ENCODE measurements at regions of chr2 and their contacts with region 1.

Region 1: DNA sequence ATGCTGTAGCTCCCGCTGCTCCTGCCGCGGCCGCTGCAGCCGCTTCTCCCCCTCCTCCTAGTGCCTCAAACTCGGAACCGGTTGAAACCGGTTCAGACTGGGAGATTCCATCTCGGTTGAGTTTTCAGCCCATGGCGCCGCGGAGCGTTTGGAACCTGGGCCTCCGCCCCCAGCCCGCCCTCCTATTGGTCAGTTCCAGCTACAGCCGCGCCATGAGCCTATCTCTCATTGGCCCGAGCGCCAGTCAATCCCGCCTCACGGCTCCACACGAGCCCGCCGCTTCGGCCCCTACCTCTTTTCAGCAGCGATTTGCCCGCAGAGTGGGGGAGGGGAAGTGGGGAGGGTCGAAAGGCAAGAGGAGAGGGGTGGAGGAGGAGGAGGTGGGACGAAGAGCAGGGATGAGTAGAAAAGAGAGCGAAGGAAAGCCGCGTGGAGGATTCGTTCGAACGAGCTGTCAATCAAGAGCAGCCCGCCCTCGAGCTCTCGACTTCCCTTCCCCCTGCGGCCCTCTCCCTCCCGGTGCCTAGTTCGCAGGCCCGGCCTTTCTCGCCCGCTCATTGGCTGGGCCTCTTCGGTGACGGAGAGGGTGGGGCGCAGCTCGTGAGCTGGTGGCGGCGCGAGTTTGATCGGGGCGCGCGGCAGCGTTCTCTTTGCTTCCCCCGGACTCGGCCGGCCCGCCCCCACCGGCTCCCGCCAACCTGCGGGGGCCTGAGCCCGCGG is at the start of gene XPO1:
- DNase-seq: peak; percentile 100
- H3K4me3 Mint-ChIP-seq: peak within 1 kb of the TSS; percentile 90
- H3K27ac Mint-ChIP-seq: peak within 1 kb of the TSS; percentile 97
- H3K4me1 Mint-ChIP-seq: peaks cover 27% of the 10 kb centered on the region
- H3K27me3 Mint-ChIP-seq: no peaks in the 10 kb centered on the region
- total RNA-seq, gene XPO1: 201 to 203 TPM

Region 2: DNA sequence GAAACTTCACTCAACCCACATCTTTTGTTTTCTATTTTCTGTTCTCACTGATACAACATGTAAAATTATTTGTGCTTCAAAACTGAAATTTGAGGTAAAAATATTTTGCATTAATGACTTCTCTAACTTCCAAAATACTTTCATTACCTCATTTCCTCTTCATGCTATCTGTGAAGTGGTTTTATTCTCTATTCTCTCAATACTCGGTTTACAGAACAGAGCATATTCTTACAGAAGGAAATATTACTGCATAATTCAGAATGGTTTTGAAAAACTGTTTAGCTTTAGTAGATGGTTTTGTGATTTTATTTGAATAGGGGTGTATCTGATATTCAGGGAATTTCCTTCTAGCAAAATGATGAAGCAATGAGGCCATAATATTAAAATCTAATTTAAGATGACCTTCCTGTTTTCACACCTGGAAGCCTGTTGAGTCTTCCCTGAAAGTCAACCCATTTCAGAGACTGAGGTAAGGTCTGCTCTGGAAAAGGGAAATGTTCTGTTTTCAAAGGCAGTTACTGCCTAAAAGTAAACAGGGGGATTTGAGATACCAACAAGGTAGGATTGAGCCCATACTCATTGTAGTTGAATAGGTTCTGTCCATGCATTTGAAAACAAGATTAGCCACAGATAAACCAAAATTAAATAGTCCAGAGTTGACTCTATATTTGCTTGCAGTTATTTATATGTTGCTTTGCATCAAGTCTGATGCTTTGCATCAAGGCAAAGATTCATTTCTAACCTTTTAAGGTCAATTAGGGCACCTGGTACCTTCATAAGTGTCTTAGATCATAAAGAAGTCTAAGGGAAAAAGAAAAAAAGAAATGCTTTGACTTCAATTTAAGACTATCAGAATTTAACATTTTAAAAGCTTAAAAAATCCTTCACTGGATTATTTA is 571.6 kb before region 1 on chr2:
- CTCF ChIA-PET with region 1: no interaction called
- intact Hi-C with region 1: loop called (anchors 2 kb)
- DNase-seq: no peak
- H3K4me3 Mint-ChIP-seq: peak overlapping the region; percentile 11
- H3K27ac Mint-ChIP-seq: peak overlapping the region; percentile 62
- H3K4me1 Mint-ChIP-seq: peaks cover 62% of the 10 kb centered on the region
- H3K27me3 Mint-ChIP-seq: no peaks in the 10 kb centered on the region

Region 3: GRCh38 chr2:61144697-61145268 is 393.6 kb before region 1 on chr2:
- CTCF ChIA-PET with region 1: no interaction called
- intact Hi-C with region 1: loop called (anchors 2 kb)
- DNase-seq: peak; percentile 97
- H3K4me3 Mint-ChIP-seq: peak overlapping the region; percentile 92
- H3K27ac Mint-ChIP-seq: peak overlapping the region; percentile 85
- H3K4me1 Mint-ChIP-seq: peaks cover 6% of the 10 kb centered on the region
- H3K27me3 Mint-ChIP-seq: no peaks in the 10 kb centered on the region

Region 4: DNA sequence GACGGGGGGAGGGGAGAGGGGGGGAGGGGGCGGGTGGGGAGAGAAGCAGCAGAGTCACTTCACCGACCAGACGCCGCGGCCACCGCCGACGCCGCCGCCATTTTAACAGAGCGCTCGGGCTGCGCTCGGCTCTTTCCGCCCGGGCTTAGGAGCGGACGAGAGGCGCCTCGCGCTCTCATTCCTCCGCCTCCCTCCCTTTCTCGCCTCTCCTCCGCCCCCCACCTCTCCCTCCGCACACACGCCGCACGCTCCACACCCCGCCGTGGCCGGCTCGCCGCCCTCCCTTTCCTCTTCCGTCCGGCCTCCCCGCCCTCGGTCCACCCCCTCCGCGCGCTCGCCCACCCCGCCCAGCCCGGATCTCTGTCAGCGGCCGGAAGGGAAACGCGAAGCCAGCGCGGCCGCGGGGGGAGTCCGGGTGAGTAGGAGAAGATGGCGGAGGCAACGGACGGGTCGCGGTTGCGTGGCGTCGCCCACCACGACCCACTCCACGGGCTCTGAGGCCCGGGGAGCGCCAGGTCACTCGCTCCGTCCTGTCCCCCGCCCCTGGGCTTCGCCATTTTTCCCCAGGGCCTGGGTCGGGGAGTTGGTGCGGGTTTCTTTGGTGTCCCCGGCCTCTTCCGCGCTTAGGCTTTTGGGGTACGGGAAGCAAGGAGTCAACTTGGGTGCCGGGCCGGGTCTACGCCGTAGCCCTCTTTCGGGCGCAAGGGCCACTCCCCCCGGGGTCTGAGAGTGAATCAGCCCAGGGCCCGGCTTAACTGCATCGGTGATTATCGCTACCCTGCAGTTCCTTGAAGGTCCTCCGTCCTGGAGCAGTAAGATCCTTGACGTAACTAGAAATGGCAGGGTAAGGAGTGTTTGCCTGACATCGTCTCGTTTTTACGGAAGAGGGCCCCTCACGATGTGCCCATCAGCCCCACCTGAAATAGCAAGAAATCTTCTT is 67.1 kb before region 1 on chr2 and contains the start of gene USP34:
- CTCF ChIA-PET with region 1: interaction called, 3 read pairs
- intact Hi-C with region 1: loop called (anchors 1 kb)
- DNase-seq: peak; percentile 94
- H3K4me3 Mint-ChIP-seq: peak within 1 kb of the TSS; percentile 98
- H3K27ac Mint-ChIP-seq: peak within 1 kb of the TSS; percentile 97
- H3K4me1 Mint-ChIP-seq: peaks cover 31% of the 10 kb centered on the region
- H3K27me3 Mint-ChIP-seq: no peaks in the 10 kb centered on the region
- total RNA-seq, gene USP34: 59.5 to 60.4 TPM

Region 5: GRCh38 chr2:61670591-61671501 is 132.5 kb after region 1 on chr2:
- CTCF ChIA-PET with region 1: no interaction called
- intact Hi-C with region 1: loop called (anchors 1 kb)
- DNase-seq: peak; percentile 51
- H3K4me3 Mint-ChIP-seq: peak overlapping the region; percentile 10
- H3K27ac Mint-ChIP-seq: peak overlapping the region; percentile 57
- H3K4me1 Mint-ChIP-seq: peaks cover 17% of the 10 kb centered on the region
- H3K27me3 Mint-ChIP-seq: no peaks in the 10 kb centered on the region

Region 6: DNA sequence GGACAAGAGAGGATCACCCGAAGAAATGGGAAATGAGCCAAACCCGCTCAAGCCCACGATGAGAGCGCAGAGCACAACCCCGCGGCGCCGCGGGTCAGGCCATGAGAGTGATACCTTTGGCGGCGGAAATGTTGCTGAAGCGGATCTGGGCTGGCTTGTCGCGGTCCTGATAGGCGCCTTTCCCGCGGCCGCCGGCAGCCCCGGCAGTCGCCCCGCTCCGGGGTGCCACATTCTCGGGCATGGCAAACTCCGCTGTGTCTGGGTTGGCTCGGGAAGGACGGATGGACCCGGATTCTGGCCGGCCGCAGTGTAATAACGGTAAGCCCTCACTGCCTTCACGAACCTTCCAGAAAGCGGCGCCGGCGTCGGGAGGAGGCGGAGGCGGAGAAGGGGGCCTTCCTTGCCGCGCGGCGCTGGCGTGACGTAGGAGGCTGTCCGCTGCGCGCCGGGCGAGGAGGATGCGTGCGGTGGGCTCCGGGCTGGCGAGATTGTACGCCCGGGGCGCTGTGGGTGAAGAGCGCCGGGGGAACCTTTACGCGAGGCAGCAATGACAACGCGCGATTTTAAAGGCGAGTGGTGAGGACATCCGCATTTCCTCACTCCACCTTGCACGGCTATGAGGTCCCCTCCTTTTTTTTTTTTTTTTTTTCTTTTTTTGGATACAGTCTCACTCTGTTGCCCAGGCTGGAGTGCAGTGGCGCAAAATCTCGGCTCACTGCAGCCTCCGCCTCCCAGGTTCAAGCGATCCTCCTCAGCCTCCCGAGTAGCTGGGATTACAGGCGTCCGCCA is 350.1 kb after region 1 on chr2 and contains the start of gene CCT4:
- CTCF ChIA-PET with region 1: no interaction called
- intact Hi-C with region 1: loop called (anchors 1 kb)
- DNase-seq: peak; percentile 86
- H3K4me3 Mint-ChIP-seq: peak within 1 kb of the TSS; percentile 99
- H3K27ac Mint-ChIP-seq: peak within 1 kb of the TSS; percentile 98
- H3K4me1 Mint-ChIP-seq: peaks cover 34% of the 10 kb centered on the region
- H3K27me3 Mint-ChIP-seq: no peaks in the 10 kb centered on the region
- total RNA-seq, gene CCT4: 363 to 377 TPM

Region 7: DNA sequence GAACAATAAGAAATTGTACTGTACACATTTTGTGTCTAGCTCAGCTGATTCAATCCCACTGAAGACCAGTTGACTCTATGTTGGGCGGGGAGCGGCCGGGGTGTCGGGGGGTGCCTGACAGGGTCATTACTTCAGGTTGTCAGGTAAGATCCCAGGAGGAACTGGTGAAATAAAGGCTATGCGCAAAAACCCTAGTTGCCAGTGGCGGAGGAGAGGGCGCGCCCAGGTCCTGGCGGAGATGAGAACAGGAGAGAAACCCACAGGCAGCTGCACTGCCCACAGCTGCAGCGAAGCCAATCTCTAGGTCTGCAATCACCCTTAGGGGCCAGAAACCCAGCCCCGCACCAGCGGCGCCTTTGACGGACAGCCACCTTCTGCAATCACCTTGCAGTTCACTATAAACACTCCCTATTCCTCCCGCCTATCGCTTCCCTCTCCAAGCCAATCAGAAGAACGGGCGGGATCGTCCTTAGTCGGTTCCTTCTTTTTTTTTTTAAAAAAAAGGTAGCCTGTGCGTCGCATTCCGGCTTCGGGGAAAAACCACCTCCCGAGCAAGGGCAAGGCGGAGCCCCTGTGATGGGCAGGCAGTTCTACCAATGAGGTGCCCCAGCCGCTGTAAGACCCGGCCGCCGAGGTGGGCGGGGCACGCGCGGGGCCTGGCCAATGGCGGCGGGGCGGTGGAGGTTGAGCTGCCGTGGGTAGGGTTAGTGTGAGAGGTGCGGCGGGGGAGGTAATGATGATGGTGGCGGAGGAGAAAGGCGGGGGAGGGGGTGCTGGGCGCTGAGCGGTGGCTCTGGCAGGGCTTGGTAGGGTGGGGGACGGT is 1166.9 kb after region 1 on chr2 and contains the start of gene EHBP1:
- CTCF ChIA-PET with region 1: no interaction called
- intact Hi-C with region 1: loop called (anchors 1 kb)
- DNase-seq: peak; percentile 98
- H3K4me3 Mint-ChIP-seq: peak within 1 kb of the TSS; percentile 90
- H3K27ac Mint-ChIP-seq: peak within 1 kb of the TSS; percentile 76
- H3K4me1 Mint-ChIP-seq: peaks cover 27% of the 10 kb centered on the region
- H3K27me3 Mint-ChIP-seq: no peaks in the 10 kb centered on the region
- total RNA-seq, gene EHBP1: 17.4 to 17.5 TPM